PC-3 (cell line): ENCODE measurements at regions of chr5 and their contacts with region 1.

Region 1: DNA sequence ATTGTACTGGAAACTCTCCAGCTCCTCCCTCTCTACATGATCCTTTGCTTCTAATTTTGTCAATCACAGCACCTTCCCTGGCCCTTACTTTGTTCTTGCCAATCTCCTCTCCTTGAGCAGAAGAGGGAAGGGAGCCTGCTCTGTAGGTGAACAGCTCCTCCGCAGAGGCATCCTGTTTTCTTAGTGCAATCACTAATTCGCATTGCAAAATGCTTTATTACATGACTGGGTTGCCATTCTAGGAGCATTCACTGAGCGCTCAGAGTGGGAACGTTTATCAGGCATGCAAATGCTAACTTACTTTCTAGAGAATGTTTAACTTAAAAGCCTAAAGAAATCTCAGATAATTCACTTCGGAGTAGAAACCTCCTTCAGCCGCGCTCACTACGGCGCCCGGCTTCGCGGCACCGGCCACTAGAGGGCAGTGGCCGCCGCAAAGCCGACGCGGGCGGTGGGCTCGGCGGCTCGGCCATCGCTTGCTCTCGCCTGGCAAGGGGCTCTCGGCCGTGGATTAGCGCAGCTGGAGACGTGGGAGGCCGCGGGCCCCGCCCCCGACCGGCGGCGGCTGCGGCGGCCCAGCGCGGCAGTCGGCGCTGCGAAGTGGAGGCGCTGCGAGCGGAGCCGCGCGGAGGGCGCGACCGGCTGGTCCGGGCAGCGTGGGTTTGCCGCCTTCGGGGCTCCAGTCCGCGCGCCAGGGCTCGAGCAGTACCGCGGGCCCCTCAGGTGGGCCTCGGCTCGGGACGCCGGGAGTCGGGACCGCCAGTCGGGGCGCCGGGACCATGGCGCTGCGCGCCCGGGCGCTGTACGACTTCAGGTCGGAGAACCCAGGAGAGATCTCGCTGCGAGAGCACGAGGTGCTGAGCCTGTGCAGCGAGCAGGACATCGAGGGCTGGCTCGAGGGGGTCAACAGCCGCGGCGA is at the start of gene SNX18:
- DNase-seq: peak; percentile 85
- ATAC-seq: peak; percentile 82
- H3K4me3 ChIP-seq: peak within 1 kb of the TSS; percentile 76
- H3K27ac ChIP-seq: no peak within 1 kb of the TSS
- H3K4me1 ChIP-seq: peaks cover 21% of the 10 kb centered on the region
- H3K27me3 ChIP-seq: no peaks in the 10 kb centered on the region
- CTCF ChIP-seq: peak; percentile 77
- total RNA-seq, gene SNX18: 14.3 and 16.5 TPM in 2 replicates

Region 2: GRCh38 chr5:54646356-54647101 is 129.1 kb after region 1 on chr5:
- CTCF ChIA-PET with region 1: no interaction called
- POLR2A ChIA-PET with region 1: no interaction called
- intact Hi-C with region 1: loop called (anchors 10 kb)
- DNase-seq: peak; percentile 44
- ATAC-seq: peak; percentile 56
- H3K4me3 ChIP-seq: no peak overlapping the region
- H3K27ac ChIP-seq: no peak overlapping the region
- H3K4me1 ChIP-seq: peaks cover 32% of the 10 kb centered on the region
- H3K27me3 ChIP-seq: no peaks in the 10 kb centered on the region
- CTCF ChIP-seq: no peak

Region 3: GRCh38 chr5:54743997-54744788 is 226.8 kb after region 1 on chr5:
- CTCF ChIA-PET with region 1: interaction called, 4 read pairs
- POLR2A ChIA-PET with region 1: no interaction called
- intact Hi-C with region 1: loop called (anchors 1 kb)
- DNase-seq: peak; percentile 81
- ATAC-seq: peak; percentile 51
- H3K4me3 ChIP-seq: no peak overlapping the region
- H3K27ac ChIP-seq: peak overlapping the region; percentile 75
- H3K4me1 ChIP-seq: peaks cover 49% of the 10 kb centered on the region
- H3K27me3 ChIP-seq: no peaks in the 10 kb centered on the region
- CTCF ChIP-seq: no peak

Region 4: DNA sequence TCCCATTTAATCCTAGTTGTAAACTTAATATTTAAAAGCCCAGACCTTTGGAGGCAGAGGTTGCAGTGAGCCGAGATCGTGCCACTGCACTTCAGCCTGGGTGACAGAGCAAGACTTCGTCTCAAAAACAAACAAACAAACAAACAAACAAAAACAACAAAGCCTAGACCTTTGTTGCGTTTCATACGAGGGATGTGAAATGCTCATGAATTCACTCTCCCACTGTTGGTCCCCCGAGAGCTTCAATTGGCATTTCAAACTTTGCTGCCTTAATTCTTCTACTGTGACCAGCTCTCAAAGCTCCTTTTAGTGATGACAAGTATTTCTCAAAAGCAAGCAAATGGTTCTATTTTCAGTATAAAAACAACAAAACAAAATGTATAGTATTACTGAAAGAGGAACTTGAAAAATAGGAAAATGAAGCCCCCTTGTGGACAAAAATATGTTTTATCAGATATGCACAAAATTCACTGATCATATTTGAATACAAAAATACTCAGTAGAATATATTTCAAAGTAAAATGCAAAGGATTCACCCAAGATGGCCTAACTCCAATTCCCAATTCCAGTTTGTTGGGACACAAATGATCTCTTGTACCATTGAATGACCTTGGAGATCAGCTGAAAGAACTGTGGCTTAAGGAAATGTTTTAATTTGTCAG is 327.6 kb after region 1 on chr5:
- CTCF ChIA-PET with region 1: interaction called, 9 read pairs
- POLR2A ChIA-PET with region 1: interaction called, 4 read pairs
- intact Hi-C with region 1: loop called (anchors 1 kb)
- DNase-seq: peak; percentile 62
- ATAC-seq: peak; percentile 50
- H3K4me3 ChIP-seq: peak overlapping the region; percentile 44; the same call in 1 of the 2 replicates
- H3K27ac ChIP-seq: no peak overlapping the region
- H3K4me1 ChIP-seq: no peaks in the 10 kb centered on the region
- H3K27me3 ChIP-seq: no peaks in the 10 kb centered on the region
- CTCF ChIP-seq: peak; percentile 67

Region 5: DNA sequence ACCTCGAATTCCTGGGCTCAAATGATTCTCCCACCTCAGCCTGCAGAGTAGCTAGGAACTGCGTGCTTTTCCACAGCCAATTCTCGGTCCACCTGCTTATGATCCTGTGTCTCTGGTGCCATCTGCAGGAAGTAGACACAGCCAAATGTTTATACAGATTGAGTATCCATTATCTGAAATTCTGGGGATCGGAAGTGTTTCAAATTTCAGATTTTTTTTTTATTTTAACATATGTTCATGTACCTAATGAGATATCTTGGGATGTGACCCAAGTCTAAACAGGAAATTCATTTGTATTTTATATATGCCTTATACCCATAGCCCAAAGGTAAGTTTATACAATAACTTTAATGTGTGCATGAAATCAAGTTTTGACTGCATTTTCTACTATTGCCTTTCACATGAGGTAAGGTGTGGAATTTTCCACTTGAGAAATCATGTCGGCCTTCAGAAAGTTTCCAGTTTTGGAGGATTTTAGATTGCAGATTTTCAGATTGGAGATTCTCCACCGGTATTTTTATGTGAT is 378.4 kb after region 1 on chr5:
- CTCF ChIA-PET with region 1: interaction called, 4 read pairs
- POLR2A ChIA-PET with region 1: no interaction called
- intact Hi-C with region 1: loop called (anchors 1 kb)
- DNase-seq: peak; percentile 59
- ATAC-seq: peak; percentile 68
- H3K4me3 ChIP-seq: no peak overlapping the region
- H3K27ac ChIP-seq: no peak overlapping the region
- H3K4me1 ChIP-seq: no peaks in the 10 kb centered on the region
- H3K27me3 ChIP-seq: no peaks in the 10 kb centered on the region
- CTCF ChIP-seq: peak; percentile 60